Aorta (tissue), 5 donors: ENCODE measurements at regions of chr15 and their contacts with region 1.

Region 1: GRCh38 chr15:38647683-38648082 is 83.1 kb upstream of the RASGRP1 start:
- DNase-seq: no peak
- ATAC-seq: no peak
- H3K4me3 ChIP-seq: no peak overlapping the region
- H3K27ac ChIP-seq: no peak overlapping the region
- H3K4me1 ChIP-seq: no peaks in the 10 kb centered on the region
- H3K27me3 ChIP-seq: no peaks in the 10 kb centered on the region

Region 2: DNA sequence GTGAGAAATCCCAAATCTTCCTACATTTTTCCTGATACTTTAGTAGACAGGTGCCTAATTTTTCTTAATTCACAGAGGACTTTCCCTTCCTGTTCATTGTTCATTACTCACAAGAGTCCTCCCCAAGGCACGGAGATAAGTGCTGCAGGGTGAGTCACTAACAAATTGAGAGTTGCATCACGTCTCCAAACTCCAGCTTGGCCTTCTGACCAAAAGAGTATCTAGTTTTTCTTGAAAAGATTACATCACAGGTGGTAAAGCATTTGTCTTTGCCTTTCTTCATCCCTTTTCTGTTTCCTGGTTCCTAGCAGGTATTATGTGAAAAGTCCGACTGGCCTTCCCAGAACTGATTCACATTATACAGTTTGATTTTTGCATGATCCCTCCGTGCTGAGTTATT is 58.2 kb before region 1 on chr15:
- intact Hi-C with region 1: loop called in 1 of 2 experiments (anchors 10 kb)
- DNase-seq: no peak
- ATAC-seq: peak; percentile 19
- H3K4me3 ChIP-seq: no peak overlapping the region
- H3K27ac ChIP-seq: no peak overlapping the region
- H3K4me1 ChIP-seq: no peaks in the 10 kb centered on the region
- H3K27me3 ChIP-seq: no peaks in the 10 kb centered on the region

Region 3: DNA sequence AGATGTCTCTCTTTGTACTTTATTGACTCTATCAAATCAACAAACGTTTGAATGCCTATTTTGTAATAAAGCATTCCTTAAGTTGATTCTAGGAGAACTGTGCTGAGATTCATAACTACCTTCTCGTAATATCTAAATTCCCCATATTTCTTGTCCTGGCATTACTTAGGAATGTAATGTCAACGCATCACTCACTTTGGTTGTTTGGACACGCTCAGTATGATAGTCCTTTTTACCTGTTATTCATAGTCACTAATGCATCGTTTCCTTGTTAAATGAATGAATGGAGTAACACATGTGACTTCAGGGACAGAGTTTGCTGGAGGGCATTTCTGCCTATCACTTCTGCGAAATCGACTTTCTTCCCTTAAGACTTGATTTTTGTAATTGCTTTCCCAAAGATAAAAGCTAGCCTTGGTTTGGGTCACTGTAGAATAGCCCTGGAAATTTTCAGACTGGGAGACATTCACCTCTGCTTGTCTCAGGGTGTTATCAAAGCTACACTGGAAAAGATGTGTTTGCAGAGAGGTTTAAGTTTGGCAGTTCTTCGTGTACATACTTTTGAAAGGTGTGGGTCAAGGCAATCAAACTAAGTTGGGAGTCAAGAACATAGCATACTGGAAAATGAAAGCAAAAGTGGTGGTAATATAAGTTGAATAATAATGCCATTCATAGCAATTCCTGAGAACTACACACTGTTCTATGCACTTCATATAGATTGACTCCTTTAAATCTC is 38.8 kb before region 1 on chr15:
- intact Hi-C with region 1: no loop called
- DNase-seq: no peak
- ATAC-seq: no peak
- H3K4me3 ChIP-seq: no peak overlapping the region
- H3K27ac ChIP-seq: no peak overlapping the region
- H3K4me1 ChIP-seq: no peaks in the 10 kb centered on the region
- H3K27me3 ChIP-seq: no peaks in the 10 kb centered on the region

Region 4: DNA sequence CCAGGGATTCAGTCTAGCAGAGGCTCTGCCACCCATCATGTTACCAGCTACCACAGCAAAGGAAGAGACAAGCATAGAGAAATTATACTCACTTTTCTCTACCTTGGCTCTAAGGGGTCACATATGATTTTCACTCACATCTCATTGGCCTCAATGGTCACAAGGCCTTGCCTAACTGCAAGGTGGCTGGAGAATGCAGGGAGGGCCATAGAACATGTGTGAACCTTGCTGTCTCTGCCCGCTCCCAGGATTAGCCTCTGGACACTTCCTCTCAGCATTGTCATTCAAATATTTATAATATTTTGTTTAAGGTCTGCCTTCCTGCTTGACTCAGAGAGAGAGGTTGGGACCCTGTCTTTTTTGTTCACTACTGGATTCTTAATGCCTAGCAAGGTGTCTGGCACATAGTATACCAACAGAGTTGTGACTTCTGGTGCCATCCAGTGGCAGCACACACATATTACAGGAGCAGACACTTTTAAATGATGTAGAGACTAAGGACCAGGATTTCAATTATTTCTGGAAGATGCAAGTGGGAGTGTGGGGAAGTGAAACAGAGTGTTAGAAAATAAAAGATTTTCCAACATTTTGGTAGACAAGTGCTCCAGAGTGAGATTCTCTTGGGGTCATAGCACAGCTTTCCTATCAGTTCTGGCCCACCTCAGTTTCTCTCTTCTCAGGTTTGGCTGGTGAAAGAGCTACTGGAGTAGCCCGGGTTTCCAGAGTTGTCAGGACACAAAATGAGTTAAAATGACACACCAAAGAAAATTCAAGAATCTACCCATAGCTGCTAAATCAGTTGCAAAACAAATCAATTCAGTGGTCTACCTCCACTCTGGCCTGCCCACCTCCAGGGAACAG is 35.9 kb after region 1 on chr15:
- intact Hi-C with region 1: no loop called
- DNase-seq: peak in 1 of 2 donors; percentile 65
- ATAC-seq: peak; percentile 66
- H3K4me3 ChIP-seq: no peak overlapping the region
- H3K27ac ChIP-seq: no peak overlapping the region
- H3K4me1 ChIP-seq: no peaks in the 10 kb centered on the region
- H3K27me3 ChIP-seq: peaks cover 0 to 2% of the 10 kb centered on the region in 2 donors